ENCODE measurements at regions of chr2 and their contacts with region 1.

Region 1: GRCh38 chr2:121076885-121077549 is 208.0 kb downstream of the TFCP2L1 start:
- DNase-seq: peak; percentile 78
- H3K4me3 ChIP-seq: no peak overlapping the region
- H3K27ac ChIP-seq: no peak overlapping the region
- H3K4me1 ChIP-seq: no peaks in the 10 kb centered on the region
- H3K27me3 ChIP-seq: peaks cover 16% of the 10 kb centered on the region
- CTCF ChIP-seq: peak; percentile 90

Region 2: DNA sequence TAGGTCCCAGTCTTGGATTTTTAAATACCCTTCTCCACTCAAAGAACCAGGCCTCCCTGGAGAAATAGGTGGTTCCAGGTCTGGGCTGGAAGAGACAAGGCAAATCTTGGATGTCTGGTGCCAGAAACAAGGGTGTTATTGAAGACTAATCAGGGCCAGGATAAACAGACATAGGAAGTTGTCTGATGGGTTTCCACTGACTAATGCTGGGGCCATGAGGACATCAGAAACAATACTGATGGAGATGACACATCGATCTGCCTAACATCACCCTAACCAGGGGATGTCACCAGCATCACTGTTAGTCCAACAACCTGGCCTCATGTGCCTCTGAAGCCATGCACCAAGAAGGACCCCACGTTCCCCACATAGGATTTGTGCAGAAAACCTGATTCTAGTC is 383.9 kb before region 1 on chr2:
- intact Hi-C with region 1: loop called (anchors 2 kb)
- DNase-seq: no peak
- H3K4me3 ChIP-seq: no peak overlapping the region
- H3K27ac ChIP-seq: no peak overlapping the region
- H3K4me1 ChIP-seq: no peaks in the 10 kb centered on the region
- H3K27me3 ChIP-seq: peaks cover 7% of the 10 kb centered on the region
- CTCF ChIP-seq: no peak

Region 3: DNA sequence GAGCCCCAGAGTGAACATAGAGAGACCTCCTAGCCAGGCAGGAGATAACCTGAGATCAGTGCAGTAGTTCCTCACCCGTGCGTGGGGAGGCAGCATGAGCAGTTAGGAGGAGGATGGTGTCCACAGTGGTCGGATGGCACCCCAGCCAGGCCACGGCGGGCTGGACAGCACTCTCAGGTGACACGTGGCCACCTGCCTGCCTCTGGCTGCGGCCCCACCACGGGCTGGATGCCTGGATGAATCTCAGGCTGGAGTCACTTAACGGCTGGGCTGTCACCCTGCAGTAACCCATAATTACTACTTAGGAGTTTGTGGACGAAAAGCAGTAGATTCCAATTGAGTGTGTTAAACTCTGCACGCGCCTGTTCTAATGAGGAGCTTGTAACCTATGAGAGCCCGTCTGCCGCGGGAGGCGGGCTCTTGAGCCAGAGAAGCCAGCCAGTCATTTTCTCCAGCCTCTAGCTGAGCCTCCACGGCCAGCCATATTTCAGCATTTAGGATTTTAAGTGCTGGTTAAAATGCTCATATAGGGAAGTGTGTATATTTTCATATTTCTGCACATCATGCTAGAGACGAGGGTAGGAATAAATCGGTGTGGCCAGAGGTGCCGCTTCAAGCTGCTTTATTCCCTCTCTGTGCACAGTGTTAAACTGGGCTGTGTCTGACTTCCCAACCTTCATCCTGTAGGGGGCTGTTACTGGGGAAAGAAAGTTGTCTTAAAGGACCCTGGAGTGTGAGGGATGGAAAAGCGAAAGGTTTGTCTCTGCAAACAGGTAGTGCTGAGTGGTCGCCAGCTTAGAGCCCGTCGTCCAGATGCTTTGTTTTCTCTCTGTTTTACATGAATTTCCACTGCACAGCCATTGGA is 197.4 kb before region 1 on chr2:
- intact Hi-C with region 1: no loop called
- DNase-seq: no peak
- H3K4me3 ChIP-seq: no peak overlapping the region
- H3K27ac ChIP-seq: no peak overlapping the region
- H3K4me1 ChIP-seq: no peaks in the 10 kb centered on the region
- H3K27me3 ChIP-seq: no peaks in the 10 kb centered on the region
- CTCF ChIP-seq: no peak

Region 4: DNA sequence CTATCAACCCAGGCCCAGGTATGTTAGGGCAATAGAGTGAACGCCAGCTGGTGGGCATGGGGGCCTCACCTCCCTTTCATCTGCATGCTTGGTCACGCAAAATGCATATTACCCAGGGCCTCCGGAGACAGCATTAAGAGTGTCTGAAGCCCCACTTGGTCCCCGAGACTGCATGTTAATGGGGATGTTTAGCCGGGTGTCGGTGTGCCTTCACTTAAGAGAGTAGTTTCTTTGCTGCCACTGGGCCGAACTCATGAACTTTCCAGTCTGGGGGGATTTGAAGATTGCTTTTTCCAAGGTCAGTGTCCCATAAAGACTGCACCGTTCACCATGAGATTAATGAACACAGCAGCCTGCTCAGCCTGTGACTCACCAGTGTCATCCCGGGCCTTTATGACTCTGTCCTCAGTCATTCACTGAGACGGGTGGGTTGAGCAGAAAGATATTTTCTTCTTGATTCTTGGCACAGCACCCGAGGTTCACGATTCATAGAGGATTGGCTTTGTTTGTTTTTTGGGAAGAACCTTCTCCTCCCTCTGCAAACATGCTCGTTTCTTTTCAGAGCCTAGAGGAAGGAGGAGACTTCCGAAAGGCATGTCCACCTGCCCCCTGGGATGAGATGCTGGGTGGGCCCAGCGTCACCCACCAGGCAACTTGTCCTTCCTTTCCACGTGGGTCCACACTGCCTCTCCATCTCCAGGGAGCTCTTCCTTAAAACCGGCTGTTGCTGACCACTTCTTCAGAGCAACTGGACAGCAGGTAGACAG is 142.3 kb before region 1 on chr2:
- intact Hi-C with region 1: no loop called
- DNase-seq: peak; percentile 83
- H3K4me3 ChIP-seq: no peak overlapping the region
- H3K27ac ChIP-seq: no peak overlapping the region
- H3K4me1 ChIP-seq: peaks cover 26% of the 10 kb centered on the region
- H3K27me3 ChIP-seq: no peaks in the 10 kb centered on the region
- CTCF ChIP-seq: no peak

Region 5: GRCh38 chr2:120958623-120959366 is 118.2 kb before region 1 on chr2:
- intact Hi-C with region 1: loop called (anchors 10 kb)
- DNase-seq: peak; percentile 27
- H3K4me3 ChIP-seq: no peak overlapping the region
- H3K27ac ChIP-seq: no peak overlapping the region
- H3K4me1 ChIP-seq: no peaks in the 10 kb centered on the region
- H3K27me3 ChIP-seq: no peaks in the 10 kb centered on the region
- CTCF ChIP-seq: no peak

Region 6: DNA sequence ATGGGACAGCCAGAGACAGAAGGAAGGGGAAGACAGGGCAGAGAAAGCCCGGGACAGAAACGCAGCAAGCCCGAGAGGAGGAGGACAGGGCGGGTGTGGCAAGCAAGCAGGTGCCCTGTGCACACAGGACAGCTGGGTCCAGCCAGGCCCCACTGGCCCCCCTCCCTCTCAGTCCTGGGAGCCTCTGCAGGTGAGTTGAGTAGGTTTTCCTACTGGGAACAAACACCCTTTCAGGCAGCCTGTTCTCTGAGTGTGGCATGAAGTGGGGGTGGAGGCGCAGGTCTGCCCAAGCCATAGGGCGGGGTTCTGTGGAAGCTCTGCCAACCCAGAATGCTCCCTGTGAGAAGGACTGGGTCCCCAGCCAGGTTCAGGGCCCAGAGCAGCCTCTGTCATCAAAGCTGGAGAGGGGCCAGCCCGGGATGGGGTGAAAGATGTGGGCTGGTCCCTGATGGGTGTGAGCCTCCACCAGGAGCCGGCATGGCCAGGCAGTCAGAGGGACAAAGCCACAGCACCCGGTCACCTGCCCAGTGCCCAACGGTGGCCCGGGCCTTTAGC is 78.6 kb after region 1 on chr2:
- intact Hi-C with region 1: no loop called
- DNase-seq: peak; percentile 86
- H3K4me3 ChIP-seq: peak overlapping the region; percentile 3
- H3K27ac ChIP-seq: peak overlapping the region; percentile 66
- H3K4me1 ChIP-seq: peaks cover 7% of the 10 kb centered on the region
- H3K27me3 ChIP-seq: no peaks in the 10 kb centered on the region
- CTCF ChIP-seq: no peak

Region 7: GRCh38 chr2:121710470-121711170 is 633.6 kb after region 1 on chr2:
- intact Hi-C with region 1: loop called (anchors 10 kb)
- DNase-seq: no peak
- H3K4me3 ChIP-seq: no peak overlapping the region
- H3K27ac ChIP-seq: no peak overlapping the region
- H3K4me1 ChIP-seq: no peaks in the 10 kb centered on the region
- H3K27me3 ChIP-seq: no peaks in the 10 kb centered on the region
- CTCF ChIP-seq: no peak

Measured in colonic mucosa (tissue), 4 donors.